Uterus (tissue), 4 donors: ENCODE measurements at regions of chr6 and their contacts with region 1.

Region 1: DNA sequence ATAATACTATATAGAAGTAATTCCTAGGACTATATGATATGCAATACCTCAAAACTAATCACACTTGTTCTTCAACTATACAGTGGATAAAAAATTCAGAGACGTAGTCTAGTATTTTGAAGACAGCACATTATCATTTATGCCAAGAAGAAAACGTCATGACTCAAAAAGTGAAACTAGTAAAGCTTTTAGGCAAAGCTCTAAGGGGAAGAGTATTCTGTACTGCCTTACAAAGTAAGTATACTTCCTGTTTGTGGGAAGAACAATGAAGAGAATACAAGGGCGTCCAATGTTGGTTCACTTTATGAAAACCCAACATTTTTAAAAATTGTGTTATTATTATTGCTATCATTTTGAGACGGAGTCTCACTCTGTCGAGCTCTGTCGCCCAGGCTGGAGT is 27.9 kb downstream of the LOC128125822 start:
- DNase-seq: no peak
- H3K4me3 ChIP-seq: no peak overlapping the region
- H3K27ac ChIP-seq: no peak overlapping the region
- H3K4me1 ChIP-seq: no peaks in the 10 kb centered on the region
- H3K27me3 ChIP-seq: no peaks in the 10 kb centered on the region
- CTCF ChIP-seq: no peak
- POLR2A ChIP-seq: no peak

Region 2: GRCh38 chr6:63764318-63764916 is 164.3 kb after region 1 on chr6:
- intact Hi-C with region 1: loop called (anchors 5 kb)
- DNase-seq: no peak
- H3K4me3 ChIP-seq: no peak overlapping the region
- H3K27ac ChIP-seq: no peak overlapping the region
- H3K4me1 ChIP-seq: no peaks in the 10 kb centered on the region
- H3K27me3 ChIP-seq: no peaks in the 10 kb centered on the region
- CTCF ChIP-seq: peak in 3 of 4 experiments; percentile 48 to 78 (median 51)
- POLR2A ChIP-seq: no peak

Region 3: GRCh38 chr6:63774961-63775360 is 174.8 kb after region 1 on chr6:
- intact Hi-C with region 1: no loop called
- DNase-seq: no peak
- H3K4me3 ChIP-seq: no peak overlapping the region
- H3K27ac ChIP-seq: no peak overlapping the region
- H3K4me1 ChIP-seq: no peaks in the 10 kb centered on the region
- H3K27me3 ChIP-seq: no peaks in the 10 kb centered on the region
- CTCF ChIP-seq: no peak
- POLR2A ChIP-seq: no peak

Region 4: DNA sequence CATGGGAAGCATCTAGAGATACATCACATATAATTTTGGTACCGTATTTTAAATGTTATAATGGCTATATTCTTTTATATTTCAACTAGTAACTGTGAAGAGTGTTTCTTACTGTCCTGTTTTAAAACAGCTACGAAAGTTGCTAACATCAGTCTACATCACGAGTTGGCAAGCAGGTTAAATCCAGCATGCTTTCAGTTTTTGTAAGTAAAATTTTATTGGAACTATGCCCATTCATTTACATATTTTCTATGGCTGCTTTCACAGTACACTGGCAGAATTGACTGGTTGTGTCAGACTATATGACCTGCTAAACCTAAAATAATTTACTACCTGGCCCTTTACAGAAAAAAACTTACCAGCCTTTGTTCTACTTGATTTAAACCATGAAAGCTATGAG is 513.6 kb after region 1 on chr6:
- intact Hi-C with region 1: no loop called
- DNase-seq: no peak
- H3K4me3 ChIP-seq: no peak overlapping the region
- H3K27ac ChIP-seq: no peak overlapping the region
- H3K4me1 ChIP-seq: no peaks in the 10 kb centered on the region
- H3K27me3 ChIP-seq: no peaks in the 10 kb centered on the region
- CTCF ChIP-seq: no peak
- POLR2A ChIP-seq: no peak